GM12878 (cell line): ENCODE measurements at regions of chr17 and their contacts with region 1.

Region 1: DNA sequence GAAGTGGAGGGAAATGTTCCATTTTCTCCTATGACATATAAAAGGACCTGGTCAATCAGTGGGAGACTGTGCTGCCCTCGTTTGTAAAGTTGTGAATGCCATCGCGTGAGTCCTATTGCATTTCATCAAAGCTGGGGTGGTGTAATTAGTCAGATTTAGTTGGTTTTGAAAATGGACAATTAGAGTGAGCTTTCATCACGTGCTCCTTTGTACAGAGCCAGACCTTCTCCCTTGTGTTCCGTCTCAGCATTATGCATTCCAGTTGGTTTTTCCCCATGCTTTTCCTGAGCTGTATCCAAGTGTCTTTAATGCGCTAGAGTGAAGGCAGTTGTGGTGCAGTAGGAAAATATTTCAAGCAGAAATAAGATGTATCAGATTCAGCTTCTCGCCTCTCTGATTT is 10.4 kb downstream of the SEC14L1 start:
- DNase-seq: no peak
- ATAC-seq: no peak
- H3K4me3 ChIP-seq: no peak overlapping the region
- H3K27ac ChIP-seq: no peak overlapping the region
- H3K4me1 ChIP-seq: peaks cover 29% of the 10 kb centered on the region
- H3K27me3 ChIP-seq: no peaks in the 10 kb centered on the region
- CTCF ChIP-seq: no peak
- EP300 ChIP-seq: no peak
- POLR2A ChIP-seq: no peak
- RAD21 ChIP-seq: no peak

Region 2: GRCh38 chr17:77140166-77140878 is 10.9 kb before region 1 on chr17:
- CTCF ChIA-PET with region 1: interaction called, 17 read pairs
- POLR2A ChIA-PET with region 1: no interaction called
- RAD21 ChIA-PET with region 1: no interaction called
- SMC1A ChIA-PET with region 1: interaction called, 10 read pairs
- in situ Hi-C with region 1: no loop called
- intact Hi-C with region 1: no loop called
- DNase-seq: peak; percentile 93
- ATAC-seq: peak; percentile 83
- H3K4me3 ChIP-seq: peak overlapping the region; percentile 34
- H3K27ac ChIP-seq: peak overlapping the region; percentile 84
- H3K4me1 ChIP-seq: peaks cover 17% of the 10 kb centered on the region
- H3K27me3 ChIP-seq: no peaks in the 10 kb centered on the region
- CTCF ChIP-seq: no peak
- EP300 ChIP-seq: peak; percentile 58 to 70; a peak in 2 of 4 replicates
- POLR2A ChIP-seq: peak; percentile 88
- RAD21 ChIP-seq: peak; percentile 12; the same call in 1 of the 2 replicates